ENCODE measurements at regions of chr2 and their contacts with region 1.

Region 1: DNA sequence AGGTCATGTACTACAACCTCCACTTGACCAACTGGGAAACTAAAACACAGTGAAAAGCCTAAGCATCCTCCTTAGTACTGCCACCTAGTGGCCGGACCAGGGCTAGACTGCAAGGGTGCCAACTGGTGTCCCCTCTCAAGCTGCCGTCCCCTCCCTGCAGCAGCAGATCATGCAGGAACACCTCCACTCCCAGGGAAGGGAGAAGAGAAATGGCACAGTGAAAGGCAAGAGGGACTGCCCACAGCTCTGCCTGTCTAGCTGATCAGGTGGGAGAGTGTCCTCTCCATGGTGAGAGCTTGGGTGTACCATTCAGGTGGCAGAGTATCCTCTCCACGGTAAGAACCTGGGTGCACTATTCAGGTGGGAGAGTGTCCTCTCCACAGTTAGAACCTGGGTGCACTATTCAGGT is 78.1 kb downstream of the AAK1 start:
- DNase-seq: peak; percentile 67

Region 2: DNA sequence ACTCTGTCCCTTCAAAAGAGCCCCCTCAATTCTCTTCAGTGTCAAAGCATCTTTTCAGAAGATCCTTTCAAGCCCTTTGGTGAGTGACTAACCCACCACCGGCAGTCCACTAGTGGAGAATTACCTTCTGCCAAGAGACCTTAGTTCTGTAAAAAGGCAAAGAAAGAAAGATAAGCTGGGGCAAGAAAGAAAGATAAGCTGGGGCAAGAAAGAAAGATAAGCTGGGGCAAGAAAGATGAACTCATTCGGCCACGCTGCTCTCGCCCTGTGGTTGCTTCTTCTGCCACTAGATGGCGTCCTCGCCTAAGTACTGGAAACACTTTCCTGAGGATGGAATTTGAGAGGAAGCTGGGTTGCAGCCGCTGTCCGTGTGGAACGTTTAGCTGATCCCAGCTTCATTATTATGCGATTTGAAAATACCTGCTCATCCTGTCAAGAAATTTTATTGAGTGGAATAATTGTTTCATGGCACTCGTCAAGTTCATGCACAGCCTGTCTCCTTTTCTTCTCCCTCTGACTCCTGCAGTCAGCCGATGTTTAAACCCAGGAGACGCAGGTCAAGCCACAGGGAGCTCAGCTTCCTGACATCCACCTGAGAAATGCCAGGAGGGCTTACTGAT is 159.2 kb after region 1 on chr2:
- in situ Hi-C with region 1: loop called (anchors 25 kb)
- DNase-seq: peak; percentile 85

Region 3: DNA sequence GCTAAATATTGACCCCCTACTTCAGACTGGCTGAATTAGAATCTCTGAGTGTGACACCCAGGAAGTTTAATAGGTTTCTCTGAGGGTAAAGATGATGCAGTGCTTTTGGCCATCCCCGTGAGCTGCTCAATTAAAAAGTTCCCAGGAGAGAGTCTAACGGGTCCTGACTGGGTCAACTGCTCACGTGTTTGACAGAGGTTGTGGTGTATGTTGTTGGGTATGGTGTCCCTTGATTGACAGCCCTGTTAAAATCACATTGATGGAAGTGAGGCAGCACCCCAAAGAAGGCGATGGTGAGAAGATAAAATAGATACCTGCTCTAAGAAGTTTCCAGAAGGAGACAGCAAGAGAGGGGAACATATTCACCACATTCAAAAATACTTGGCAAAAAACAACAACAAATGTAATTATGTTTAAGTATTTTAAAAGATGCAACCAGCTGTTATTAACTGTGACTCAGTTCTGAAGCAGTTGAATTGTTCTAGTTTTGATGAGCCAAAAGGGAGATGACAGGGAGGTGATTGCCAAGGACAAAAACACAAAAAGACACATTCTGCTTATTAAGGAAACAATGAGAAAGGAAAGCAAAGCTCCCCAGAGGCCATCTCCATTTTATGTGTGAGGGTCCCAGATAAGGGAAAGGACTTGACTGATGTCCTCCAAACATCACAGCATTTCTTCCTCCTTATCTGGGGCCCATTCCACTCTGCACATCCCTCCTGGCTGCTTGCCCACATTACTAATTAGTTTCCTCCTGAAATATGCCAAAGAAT is 252.5 kb after region 1 on chr2:
- in situ Hi-C with region 1: no loop called
- DNase-seq: no peak

Measured in KBM-7 (cell line).